MCF 10A (cell line): ENCODE measurements at regions of chr12 and their contacts with region 1.

Region 1: DNA sequence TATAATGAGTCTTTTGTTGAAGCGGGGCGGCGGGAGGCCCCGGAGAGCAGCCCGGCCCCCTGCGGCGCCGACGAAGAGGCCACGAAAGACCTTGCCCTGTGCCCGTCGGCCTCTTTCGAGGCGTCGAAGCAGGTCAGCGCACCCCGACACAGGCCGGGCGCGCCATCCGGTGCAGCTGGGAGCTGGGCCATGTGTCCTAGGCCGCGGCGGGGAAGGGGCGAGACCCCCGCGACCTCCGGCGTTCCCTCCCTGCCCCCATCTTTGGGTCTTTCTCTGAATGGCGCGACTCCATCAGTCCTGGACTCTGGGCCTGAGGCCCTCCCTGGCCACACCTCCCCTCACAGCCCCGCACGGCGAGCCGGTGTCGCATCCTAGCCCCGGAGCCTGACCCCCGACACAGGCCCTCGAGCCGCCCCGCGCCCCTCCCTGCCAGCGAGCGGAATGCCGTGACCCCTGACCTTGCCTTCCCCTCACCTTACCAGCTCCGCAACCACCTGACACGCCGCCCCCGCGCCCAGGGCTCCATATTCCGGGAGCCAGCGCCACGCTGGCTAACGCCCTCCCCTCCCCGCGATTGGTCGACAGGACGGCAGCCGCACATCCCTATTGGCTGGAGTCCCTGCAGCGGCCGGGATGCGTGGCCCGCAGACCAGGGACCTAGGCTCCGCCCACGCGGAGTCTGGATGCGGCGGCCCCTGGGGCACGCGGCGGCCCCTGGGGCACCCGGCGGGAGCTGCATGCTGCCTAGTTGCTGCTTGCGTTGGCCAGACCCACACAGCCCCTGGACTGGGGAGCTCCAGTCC is at the start of gene SLC11A2:
- DNase-seq: peak; percentile 96
- H3K4me3 Mint-ChIP-seq: peak within 1 kb of the TSS; percentile 77
- H3K27ac Mint-ChIP-seq: peak within 1 kb of the TSS; percentile 99
- H3K4me1 Mint-ChIP-seq: peaks cover 34% of the 10 kb centered on the region
- H3K27me3 Mint-ChIP-seq: no peaks in the 10 kb centered on the region
- CTCF ChIP-seq: no peak
- total RNA-seq, gene SLC11A2: 45.6 and 60.9 TPM in 2 replicates

Region 2: GRCh38 chr12:50763639-50764285 is 262.3 kb before region 1 on chr12 and contains the start of gene ATF1:
- CTCF ChIA-PET with region 1: interaction called, 21 read pairs
- POLR2A ChIA-PET with region 1: interaction called, 118 read pairs
- intact Hi-C with region 1: loop called (anchors 1 kb)
- DNase-seq: peak; percentile 90
- H3K4me3 Mint-ChIP-seq: peak within 1 kb of the TSS; percentile 87
- H3K27ac Mint-ChIP-seq: peak within 1 kb of the TSS; percentile 99
- H3K4me1 Mint-ChIP-seq: peaks cover 20% of the 10 kb centered on the region
- H3K27me3 Mint-ChIP-seq: no peaks in the 10 kb centered on the region
- CTCF ChIP-seq: no peak
- total RNA-seq, gene ATF1: 73.1 and 87.2 TPM in 2 replicates

Region 3: GRCh38 chr12:50924439-50925341 is 101.3 kb before region 1 on chr12:
- CTCF ChIA-PET with region 1: interaction called, 5 read pairs
- POLR2A ChIA-PET with region 1: interaction called, 116 read pairs
- intact Hi-C with region 1: loop called (anchors 5 kb)
- DNase-seq: peak; percentile 97
- H3K4me3 Mint-ChIP-seq: peak overlapping the region; percentile 96
- H3K27ac Mint-ChIP-seq: peak overlapping the region; percentile 93
- H3K4me1 Mint-ChIP-seq: peaks cover 33% of the 10 kb centered on the region
- H3K27me3 Mint-ChIP-seq: no peaks in the 10 kb centered on the region
- CTCF ChIP-seq: no peak

Region 4: GRCh38 chr12:51047655-51048540 is 21.9 kb after region 1 on chr12 and contains the start of gene LETMD1:
- CTCF ChIA-PET with region 1: interaction called, 14 read pairs
- POLR2A ChIA-PET with region 1: interaction called, 108 read pairs
- intact Hi-C with region 1: no loop called
- DNase-seq: peak; percentile 99
- H3K4me3 Mint-ChIP-seq: peak within 1 kb of the TSS; percentile 94
- H3K27ac Mint-ChIP-seq: peak within 1 kb of the TSS; percentile 93
- H3K4me1 Mint-ChIP-seq: peaks cover 7% of the 10 kb centered on the region
- H3K27me3 Mint-ChIP-seq: no peaks in the 10 kb centered on the region
- CTCF ChIP-seq: peak; percentile 90
- total RNA-seq, gene LETMD1: 60.5 and 65.8 TPM in 2 replicates

Region 5: DNA sequence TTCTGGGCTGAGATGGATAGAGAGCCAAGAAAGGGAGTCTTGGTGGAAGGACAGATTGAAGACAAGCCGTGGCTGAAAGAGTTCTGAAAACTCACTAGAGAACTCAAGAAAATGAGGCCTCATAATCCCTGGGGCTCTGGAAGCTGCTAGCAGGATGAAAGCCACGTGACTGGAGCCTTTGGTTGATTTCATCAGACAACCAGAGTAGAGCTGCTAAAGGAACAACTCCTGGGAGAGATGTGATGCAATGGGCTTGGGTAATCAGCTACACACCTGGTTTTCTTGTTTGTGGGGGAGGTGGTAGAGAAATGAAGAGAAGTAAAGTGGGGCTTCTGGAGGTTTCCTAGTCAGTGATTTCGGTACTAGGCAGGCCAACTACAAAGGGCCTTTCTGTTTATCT is 44.0 kb after region 1 on chr12:
- CTCF ChIA-PET with region 1: no interaction called
- POLR2A ChIA-PET with region 1: interaction called, 10 read pairs
- intact Hi-C with region 1: no loop called
- DNase-seq: peak; percentile 97
- H3K4me3 Mint-ChIP-seq: peak overlapping the region; percentile 35
- H3K27ac Mint-ChIP-seq: peak overlapping the region; percentile 83
- H3K4me1 Mint-ChIP-seq: peaks cover 10% of the 10 kb centered on the region
- H3K27me3 Mint-ChIP-seq: no peaks in the 10 kb centered on the region
- CTCF ChIP-seq: no peak

Region 6: DNA sequence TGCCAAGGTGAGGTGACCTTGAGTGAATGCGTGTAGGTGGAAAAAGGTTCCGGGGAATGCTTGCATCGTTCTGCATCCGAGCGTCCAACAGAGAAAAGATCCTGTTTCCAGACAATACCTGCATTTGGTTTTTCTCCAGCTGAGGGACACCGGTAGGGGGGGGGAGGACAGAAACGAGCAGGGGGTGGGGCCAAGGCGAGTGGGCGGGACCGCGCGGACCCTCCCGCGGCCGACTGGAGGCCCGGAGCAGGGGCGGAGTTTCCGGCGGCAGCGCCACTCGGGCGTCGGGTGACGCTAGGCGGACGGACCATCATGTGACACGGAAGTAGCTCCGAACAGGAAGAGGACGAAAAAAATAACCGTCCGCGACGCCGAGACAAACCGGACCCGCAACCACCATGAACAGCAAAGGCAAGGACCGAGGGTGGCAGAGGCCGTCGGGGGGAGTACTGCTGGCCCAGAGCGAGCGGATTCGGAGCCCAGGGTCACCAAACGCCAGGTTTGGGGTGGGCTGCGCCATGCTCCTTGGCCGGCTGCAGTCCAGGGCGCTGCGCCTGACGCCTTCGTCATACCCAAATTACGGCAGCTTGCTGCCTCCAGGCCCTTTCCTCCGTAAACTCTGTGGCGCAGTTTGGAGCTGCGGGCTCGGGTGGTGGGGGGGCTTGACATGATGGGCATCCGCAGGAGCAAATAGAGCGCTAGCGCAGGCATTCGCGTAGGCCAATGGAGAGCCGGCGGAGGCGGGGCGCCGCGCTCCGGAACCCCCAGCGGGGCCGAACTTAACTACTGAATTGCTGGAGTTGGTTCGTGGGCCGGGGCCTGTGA is 212.7 kb after region 1 on chr12 and contains the start of gene DAZAP2:
- CTCF ChIA-PET with region 1: no interaction called
- POLR2A ChIA-PET with region 1: interaction called, 14 read pairs
- intact Hi-C with region 1: no loop called
- DNase-seq: peak; percentile 92
- H3K4me3 Mint-ChIP-seq: peak within 1 kb of the TSS; percentile 96
- H3K27ac Mint-ChIP-seq: peak within 1 kb of the TSS; percentile 100
- H3K4me1 Mint-ChIP-seq: peaks cover 22% of the 10 kb centered on the region
- H3K27me3 Mint-ChIP-seq: no peaks in the 10 kb centered on the region
- CTCF ChIP-seq: no peak
- total RNA-seq, gene DAZAP2: 74.2 and 93.2 TPM in 2 replicates